ENCODE measurements at regions of chr17 and their contacts with region 1.

Region 1: GRCh38 chr17:58344047-58344790 is 7.8 kb downstream of the SUPT4H1 start:
- DNase-seq: peak; percentile 98
- H3K4me3 Mint-ChIP-seq: peak overlapping the region; percentile 92
- H3K27ac Mint-ChIP-seq: peak overlapping the region; percentile 99
- H3K4me1 Mint-ChIP-seq: peaks cover 60% of the 10 kb centered on the region
- H3K27me3 Mint-ChIP-seq: no peaks in the 10 kb centered on the region

Region 2: DNA sequence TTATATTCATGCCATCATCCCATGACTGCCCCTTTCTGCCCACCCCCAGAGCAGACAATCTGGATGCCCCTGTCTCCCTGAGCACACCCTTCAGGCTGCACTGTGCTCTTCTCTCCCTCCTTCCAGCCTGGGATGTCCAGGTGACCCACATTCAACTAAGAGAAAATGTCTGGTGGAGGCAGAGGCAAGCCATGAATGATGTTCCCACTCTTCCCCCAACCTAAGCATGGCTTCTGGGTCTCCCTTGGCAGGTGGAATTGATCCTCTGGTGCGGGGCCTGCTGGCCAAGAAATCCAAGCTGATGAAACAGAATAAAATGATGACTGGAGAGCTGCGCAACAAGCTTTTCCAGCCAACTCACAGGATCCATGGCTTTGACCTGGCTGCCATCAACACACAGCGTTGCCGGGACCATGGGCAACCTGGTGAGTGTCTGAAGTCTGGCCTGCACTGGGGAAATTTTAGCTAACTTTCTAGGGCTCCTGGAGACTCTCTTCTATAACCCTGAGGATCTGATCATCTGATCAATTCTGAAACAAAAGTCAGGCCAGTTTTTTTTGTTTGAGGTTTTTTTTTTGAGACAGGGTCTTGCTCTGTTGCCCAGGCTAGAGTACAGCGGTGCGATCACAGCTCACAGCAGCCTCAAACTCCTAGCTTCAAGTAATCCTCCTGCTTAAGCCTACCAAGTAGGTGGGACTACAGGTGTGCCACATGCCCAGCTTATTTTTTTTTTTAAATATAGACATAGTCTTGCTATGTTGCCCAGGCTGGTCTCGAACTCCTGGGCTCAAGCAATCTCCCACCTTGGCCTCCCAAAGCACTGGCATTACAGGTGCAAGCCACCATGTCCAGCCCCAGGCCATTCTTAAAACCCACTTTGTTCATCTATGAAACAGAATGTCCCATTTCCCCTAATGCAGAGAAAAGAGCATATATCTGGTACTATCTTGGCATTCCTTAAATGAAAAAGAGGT is 78.0 kb before region 1 on chr17:
- CTCF ChIA-PET with region 1: no interaction called
- intact Hi-C with region 1: no loop called
- DNase-seq: no peak
- H3K4me3 Mint-ChIP-seq: no peak overlapping the region
- H3K27ac Mint-ChIP-seq: no peak overlapping the region
- H3K4me1 Mint-ChIP-seq: no peaks in the 10 kb centered on the region
- H3K27me3 Mint-ChIP-seq: peaks cover 28% of the 10 kb centered on the region

Region 3: GRCh38 chr17:58277107-58277801 is 67.0 kb before region 1 on chr17:
- CTCF ChIA-PET with region 1: no interaction called
- intact Hi-C with region 1: loop called (anchors 2 kb)
- DNase-seq: peak; percentile 35
- H3K4me3 Mint-ChIP-seq: no peak overlapping the region
- H3K27ac Mint-ChIP-seq: no peak overlapping the region
- H3K4me1 Mint-ChIP-seq: peaks cover 4% of the 10 kb centered on the region
- H3K27me3 Mint-ChIP-seq: peaks cover 22% of the 10 kb centered on the region

Region 4: GRCh38 chr17:58329035-58329809 is 15.0 kb before region 1 on chr17:
- CTCF ChIA-PET with region 1: interaction called, 108 read pairs
- intact Hi-C with region 1: loop called (anchors 1 kb)
- DNase-seq: peak; percentile 91
- H3K4me3 Mint-ChIP-seq: peak overlapping the region; percentile 92
- H3K27ac Mint-ChIP-seq: peak overlapping the region; percentile 99
- H3K4me1 Mint-ChIP-seq: peaks cover 40% of the 10 kb centered on the region
- H3K27me3 Mint-ChIP-seq: peaks cover 14% of the 10 kb centered on the region